Ovary (tissue), 10 donors: ENCODE measurements at regions of chr3 and their contacts with region 1.

Region 1: DNA sequence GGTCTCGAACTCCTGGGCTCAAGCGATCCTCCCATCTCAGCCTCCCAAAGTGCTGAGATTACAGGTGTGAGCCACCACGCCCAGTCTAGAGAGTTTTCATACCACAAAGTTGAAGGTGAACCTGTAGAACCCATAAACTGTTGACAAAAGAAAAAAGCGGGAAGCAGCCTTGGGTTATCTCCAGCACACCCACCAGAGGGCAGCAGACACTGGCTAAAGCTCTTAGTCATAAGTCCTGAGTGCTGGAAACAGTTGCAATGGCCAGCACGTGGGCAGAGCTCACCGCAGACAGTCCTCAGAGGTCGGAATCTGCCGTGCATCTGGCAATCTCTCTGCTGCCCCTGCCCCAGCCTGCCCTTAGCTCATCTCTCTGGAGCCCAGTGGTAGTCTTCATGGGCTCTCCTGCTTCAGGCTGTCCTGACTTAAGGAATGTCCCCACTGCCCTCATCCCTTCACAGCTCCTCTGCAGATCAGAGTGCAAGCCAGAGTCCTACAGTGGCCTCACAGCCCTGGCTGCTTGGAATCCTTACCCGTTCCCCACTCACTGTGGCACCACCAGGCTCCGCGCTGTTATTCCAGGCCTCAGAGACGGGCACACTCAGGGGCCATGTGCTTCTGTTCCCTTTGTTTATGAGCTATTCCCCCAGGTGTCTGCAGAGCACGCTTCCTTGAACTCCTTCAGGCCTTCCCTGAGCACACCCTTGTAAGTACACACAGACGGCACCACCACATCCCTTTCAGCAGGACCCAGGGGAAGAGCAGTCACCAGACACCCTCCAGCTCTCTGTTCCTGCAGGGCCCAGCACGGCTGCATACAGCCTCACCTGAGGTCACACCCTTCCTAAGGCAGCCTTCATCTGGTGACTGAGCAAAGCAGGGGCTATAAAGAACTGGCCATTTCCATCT is 8.8 kb upstream of the ELP6 start:
- DNase-seq: peak; percentile 77 to 90 (median 85)
- H3K4me3 ChIP-seq: no peak overlapping the region
- H3K27ac ChIP-seq: no peak overlapping the region
- H3K4me1 ChIP-seq: peaks cover 2% of the 10 kb centered on the region
- H3K27me3 ChIP-seq: no peaks in the 10 kb centered on the region
- CTCF ChIP-seq: peak; percentile 90 to 93 (median 91)
- EP300 ChIP-seq: no peak
- POLR2A ChIP-seq: no peak

Region 2: DNA sequence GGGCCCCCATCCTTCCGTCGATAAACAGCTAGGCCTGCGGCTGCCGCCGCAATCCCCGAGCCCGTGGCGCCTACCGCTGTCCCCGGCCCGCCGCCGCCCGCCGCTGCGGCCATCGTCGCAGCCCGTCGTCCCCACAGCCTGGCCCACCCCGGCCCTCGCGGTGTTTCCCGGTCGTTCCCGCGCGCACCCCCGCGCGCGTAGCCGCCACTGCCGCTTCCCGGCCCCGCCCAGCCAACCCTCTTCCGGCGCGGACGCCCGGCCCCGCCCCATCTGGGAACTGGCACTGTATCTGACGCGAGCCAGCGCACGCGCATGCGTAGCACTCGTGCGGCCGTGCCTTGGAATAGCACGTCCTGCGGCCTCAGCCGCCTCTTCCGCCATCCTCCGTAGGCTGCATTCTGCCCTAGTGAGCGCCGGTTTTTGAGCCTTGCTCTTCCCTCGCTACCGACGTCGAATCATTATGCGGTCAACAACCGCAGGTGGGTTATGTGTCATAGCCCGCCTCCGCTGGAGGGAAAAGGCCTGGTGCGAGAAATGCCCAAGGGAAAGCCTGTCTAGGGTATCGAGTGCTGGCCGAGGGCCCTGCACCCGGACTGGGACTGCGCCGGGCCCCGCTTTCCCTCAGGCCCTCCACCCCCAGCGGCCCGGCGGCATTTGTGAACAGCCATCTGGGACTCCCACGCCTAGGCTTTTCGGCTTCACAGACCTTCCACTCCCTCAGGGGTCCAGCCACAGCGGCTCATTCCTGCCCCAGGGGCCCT is 259.5 kb after region 1 on chr3 and contains the start of gene SMARCC1:
- intact Hi-C with region 1: loop called in 3 of 4 experiments (anchors 5 kb)
- DNase-seq: peak; percentile 96 to 99 (median 98)
- H3K4me3 ChIP-seq: peak within 1 kb of the TSS; percentile 96
- H3K27ac ChIP-seq: peak within 1 kb of the TSS; percentile 71 to 91
- H3K4me1 ChIP-seq: peaks cover 6% of the 10 kb centered on the region
- H3K27me3 ChIP-seq: no peaks in the 10 kb centered on the region
- CTCF ChIP-seq: peak in 1 of 3 donors; percentile 17
- EP300 ChIP-seq: peak; percentile 73
- POLR2A ChIP-seq: peak; percentile 80
- total RNA-seq, gene SMARCC1: 26.1 to 68.9 (median 64.5) TPM

Region 3: DNA sequence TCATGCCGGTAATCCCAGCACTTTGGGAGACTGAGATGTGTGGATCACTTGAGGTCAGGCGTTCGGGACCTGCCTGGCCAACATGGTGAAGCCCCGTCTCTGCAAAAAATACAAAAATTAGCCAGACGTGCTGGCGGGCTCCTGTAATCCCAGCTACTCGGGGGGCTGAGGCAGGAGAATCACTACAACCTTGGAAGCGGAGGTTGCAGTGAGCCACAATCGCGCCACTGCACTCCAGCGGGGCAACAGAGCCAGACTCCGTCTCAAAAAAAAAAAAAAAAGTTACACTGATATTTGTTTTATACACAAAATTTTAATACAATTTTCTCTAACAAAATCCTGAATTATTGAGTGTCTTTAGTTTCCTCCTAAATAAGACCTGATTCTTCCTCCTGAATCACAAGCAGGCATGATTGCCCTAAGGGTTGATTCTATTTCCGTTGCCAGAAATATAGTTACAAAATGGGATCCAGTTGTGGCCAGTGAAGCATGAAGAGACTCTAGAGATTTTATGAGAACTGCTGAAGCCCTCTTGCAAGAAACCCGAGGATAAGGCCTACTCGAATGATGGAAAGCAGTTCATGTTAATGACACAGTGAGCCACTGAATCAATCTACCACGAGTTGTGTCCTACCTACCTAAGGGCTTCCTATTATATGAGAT is 269.0 kb after region 1 on chr3:
- intact Hi-C with region 1: loop called (anchors 2 to 5 kb)
- DNase-seq: no peak
- H3K4me3 ChIP-seq: no peak overlapping the region
- H3K27ac ChIP-seq: no peak overlapping the region
- H3K4me1 ChIP-seq: no peaks in the 10 kb centered on the region
- H3K27me3 ChIP-seq: no peaks in the 10 kb centered on the region
- CTCF ChIP-seq: no peak
- EP300 ChIP-seq: no peak
- POLR2A ChIP-seq: no peak